ENCODE measurements at regions of chr2 and their contacts with region 1.

Region 1: DNA sequence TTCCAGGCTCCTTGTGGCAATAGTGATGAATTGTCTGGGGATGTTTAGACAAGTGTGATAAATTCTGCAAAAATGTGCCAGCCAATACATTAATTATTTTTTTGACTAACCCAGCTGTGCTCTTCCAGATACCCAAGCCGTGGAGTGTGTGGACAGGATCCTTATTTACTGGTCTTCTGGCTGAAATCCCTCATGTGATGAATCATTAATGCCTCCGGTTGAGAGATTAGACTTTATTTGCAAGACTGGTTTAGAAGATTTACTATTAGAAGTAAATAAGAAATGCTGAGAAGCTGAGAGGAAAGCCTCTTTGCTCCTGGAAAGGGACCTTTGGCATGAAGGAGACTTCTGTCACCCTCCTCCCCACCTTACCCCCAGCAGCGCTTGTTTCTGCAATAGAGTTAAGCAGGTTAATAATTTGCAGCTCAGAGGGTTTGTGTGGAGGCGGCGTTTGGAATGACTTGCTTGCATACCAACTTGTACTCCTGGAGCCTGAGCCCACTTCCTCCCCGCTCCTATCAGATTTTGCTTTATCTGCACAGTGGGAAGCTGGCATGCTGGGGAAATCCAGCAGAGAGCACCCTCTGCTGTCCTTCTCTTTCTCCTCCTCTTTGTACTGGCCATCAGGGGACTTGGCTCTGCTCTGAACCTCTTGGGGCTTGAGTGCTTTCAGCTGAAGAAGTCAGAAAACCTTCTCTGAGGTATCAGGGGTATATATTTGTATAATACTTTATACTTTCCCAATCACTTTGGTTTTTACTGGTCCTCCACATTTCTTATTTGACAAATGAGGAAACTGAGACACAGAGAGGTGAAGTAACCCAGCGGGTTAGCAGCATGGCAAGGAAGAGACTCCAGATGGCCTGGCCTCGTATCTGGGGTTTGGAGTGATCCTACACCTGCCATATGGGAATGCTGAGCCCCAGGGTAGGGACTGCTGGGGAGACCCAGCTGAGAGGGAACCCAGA is 16.3 kb downstream of the SLC3A1 start:
- H3K4me3 ChIP-seq: no peak overlapping the region; the same call in 1 of the 2 replicates
- H3K27ac ChIP-seq: no peak overlapping the region
- H3K4me1 ChIP-seq: peaks cover 7% of the 10 kb centered on the region; the same call in 1 of the 2 replicates
- CTCF ChIP-seq: peak; percentile 69

Region 2: DNA sequence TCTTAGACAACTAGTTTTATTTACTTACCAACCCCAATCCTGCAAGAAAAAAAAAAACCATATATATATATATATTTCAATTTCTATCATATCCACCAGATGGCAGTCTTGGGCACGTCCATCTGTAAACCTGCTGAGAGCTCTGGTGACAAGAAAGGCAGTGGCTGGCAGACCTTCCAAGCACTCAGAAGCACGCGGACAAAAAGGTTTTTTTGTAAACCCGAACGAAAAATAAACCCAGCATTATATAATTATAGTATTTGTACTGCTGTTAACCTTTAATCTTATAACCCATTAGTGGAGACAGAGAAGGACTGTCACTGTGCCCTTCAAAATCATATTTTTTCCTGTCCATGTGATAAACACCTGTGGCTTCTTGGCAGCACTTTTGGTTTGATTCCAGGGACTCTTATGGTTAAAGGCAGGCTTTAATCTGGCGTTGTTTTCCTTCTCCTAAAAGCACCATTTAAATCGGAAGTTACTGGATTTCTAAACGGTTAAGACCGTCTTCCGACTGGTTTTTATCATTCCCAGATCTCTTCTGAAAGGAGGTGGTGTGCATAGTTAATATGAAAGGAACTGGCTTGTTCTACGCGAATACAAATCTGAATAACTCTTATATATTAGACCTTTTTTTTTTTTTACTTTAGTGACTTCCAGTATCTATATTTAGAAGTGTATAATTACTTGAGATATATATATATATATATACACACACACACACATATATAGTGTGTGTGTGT is 47.3 kb before region 1 on chr2:
- CTCF ChIA-PET with region 1: interaction called, 45 read pairs
- POLR2A ChIA-PET with region 1: no interaction called
- H3K4me3 ChIP-seq: no peak overlapping the region; the same call in none of the 2 replicates
- H3K27ac ChIP-seq: no peak overlapping the region
- H3K4me1 ChIP-seq: peaks cover 5% of the 10 kb centered on the region; the same call in 1 of the 2 replicates
- CTCF ChIP-seq: no peak